ENCODE measurements at regions of chr3 and their contacts with region 1.

Region 1: DNA sequence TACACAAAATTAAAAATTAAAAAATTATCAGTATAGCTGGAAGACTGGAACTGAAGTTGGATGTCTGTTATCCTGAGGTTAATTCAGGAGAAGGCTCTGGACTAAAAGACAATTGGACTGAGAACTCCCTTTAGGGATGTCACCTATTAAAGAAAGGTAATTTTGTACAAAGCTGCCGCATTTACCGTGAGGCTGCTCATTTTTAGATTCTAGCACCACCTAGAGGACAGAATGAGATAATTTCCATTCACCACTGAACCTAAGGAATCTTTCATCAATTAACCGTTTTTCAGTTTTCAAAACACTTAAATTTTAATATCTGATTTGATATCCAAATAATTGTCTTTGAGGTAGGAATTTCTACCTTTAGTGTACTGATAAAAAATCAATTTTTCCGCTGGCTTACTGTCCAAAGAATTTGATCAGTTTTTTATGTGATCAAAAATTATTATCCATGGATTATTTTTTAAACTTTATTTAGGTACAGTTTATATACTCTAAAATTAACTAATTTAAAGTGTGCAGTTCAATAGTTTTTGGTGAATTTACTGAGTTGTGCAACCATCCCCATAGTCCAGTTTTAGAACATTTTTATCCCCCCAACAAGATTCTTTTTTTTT is 106.7 kb upstream of the TNIK start:
- DNase-seq: peak; percentile 76
- ATAC-seq: peak; percentile 56; the same call in 1 of the 2 replicates
- H3K4me3 ChIP-seq: no peak overlapping the region
- H3K27ac ChIP-seq: no peak overlapping the region
- H3K4me1 ChIP-seq: peaks cover 23% of the 10 kb centered on the region
- H3K27me3 ChIP-seq: no peaks in the 10 kb centered on the region
- CTCF ChIP-seq: peak; percentile 91

Region 2: GRCh38 chr3:171049861-171050444 is 517.0 kb before region 1 on chr3:
- CTCF ChIA-PET with region 1: interaction called, 4 read pairs
- POLR2A ChIA-PET with region 1: no interaction called
- intact Hi-C with region 1: loop called (anchors 1 kb)
- DNase-seq: peak; percentile 81
- ATAC-seq: peak; percentile 98
- H3K4me3 ChIP-seq: no peak overlapping the region
- H3K27ac ChIP-seq: no peak overlapping the region
- H3K4me1 ChIP-seq: peaks cover 9% of the 10 kb centered on the region
- H3K27me3 ChIP-seq: no peaks in the 10 kb centered on the region
- CTCF ChIP-seq: peak; percentile 90

Region 3: GRCh38 chr3:171162986-171163723 is 403.8 kb before region 1 on chr3:
- CTCF ChIA-PET with region 1: interaction called, 3 read pairs
- POLR2A ChIA-PET with region 1: no interaction called
- intact Hi-C with region 1: loop called (anchors 1 kb)
- DNase-seq: peak; percentile 53
- ATAC-seq: no peak
- H3K4me3 ChIP-seq: no peak overlapping the region
- H3K27ac ChIP-seq: 0 out of 2 replicates have a peak overlapping the region, but pooled peaks have one; percentile 51
- H3K4me1 ChIP-seq: peaks cover 21% of the 10 kb centered on the region
- H3K27me3 ChIP-seq: no peaks in the 10 kb centered on the region
- CTCF ChIP-seq: peak; percentile 87

Region 4: GRCh38 chr3:171261446-171261845 is 305.5 kb before region 1 on chr3:
- CTCF ChIA-PET with region 1: no interaction called
- POLR2A ChIA-PET with region 1: no interaction called
- intact Hi-C with region 1: loop called (anchors 5 kb)
- DNase-seq: peak; percentile 78
- ATAC-seq: peak; percentile 97
- H3K4me3 ChIP-seq: peak overlapping the region; percentile 20
- H3K27ac ChIP-seq: peak overlapping the region; percentile 69
- H3K4me1 ChIP-seq: peaks cover 31% of the 10 kb centered on the region
- H3K27me3 ChIP-seq: no peaks in the 10 kb centered on the region
- CTCF ChIP-seq: no peak

Region 5: GRCh38 chr3:171358181-171358880 is 208.6 kb before region 1 on chr3:
- CTCF ChIA-PET with region 1: no interaction called
- POLR2A ChIA-PET with region 1: no interaction called
- intact Hi-C with region 1: loop called (anchors 1 kb)
- DNase-seq: peak; percentile 65
- ATAC-seq: peak; percentile 8; the same call in 1 of the 2 replicates
- H3K4me3 ChIP-seq: no peak overlapping the region
- H3K27ac ChIP-seq: peak overlapping the region; percentile 88
- H3K4me1 ChIP-seq: peaks cover 53% of the 10 kb centered on the region
- H3K27me3 ChIP-seq: no peaks in the 10 kb centered on the region
- CTCF ChIP-seq: no peak

Region 6: DNA sequence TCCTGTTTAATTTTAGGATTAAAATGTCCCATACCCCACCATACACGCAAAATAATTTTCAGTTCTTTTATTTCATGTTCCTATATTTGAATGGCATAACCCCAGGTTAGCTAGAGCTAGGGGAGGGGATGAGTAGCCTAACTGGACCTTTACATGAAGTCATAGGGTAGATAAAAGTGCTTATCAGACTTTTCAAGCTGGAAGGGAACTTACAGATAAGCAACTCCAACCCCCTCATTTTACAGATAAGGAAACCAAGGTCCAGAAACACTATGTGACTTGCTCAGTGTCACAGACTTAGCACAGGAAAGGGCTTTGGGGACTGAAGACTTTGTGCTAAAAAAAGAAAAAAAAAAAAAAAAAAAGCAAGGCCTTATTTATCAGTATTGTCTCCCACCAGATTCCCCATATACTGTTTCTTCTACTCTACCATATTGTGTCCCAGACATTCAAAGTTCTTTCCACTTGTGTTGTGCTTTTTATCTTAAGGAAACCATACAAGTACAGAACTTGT is 96.1 kb before region 1 on chr3:
- CTCF ChIA-PET with region 1: no interaction called
- POLR2A ChIA-PET with region 1: no interaction called
- intact Hi-C with region 1: no loop called
- DNase-seq: no peak
- ATAC-seq: no peak
- H3K4me3 ChIP-seq: no peak overlapping the region
- H3K27ac ChIP-seq: no peak overlapping the region
- H3K4me1 ChIP-seq: no peaks in the 10 kb centered on the region
- H3K27me3 ChIP-seq: no peaks in the 10 kb centered on the region
- CTCF ChIP-seq: no peak

Region 7: GRCh38 chr3:171606151-171606751 is 39.3 kb after region 1 on chr3:
- CTCF ChIA-PET with region 1: no interaction called
- POLR2A ChIA-PET with region 1: no interaction called
- intact Hi-C with region 1: no loop called
- DNase-seq: no peak
- ATAC-seq: no peak
- H3K4me3 ChIP-seq: no peak overlapping the region
- H3K27ac ChIP-seq: no peak overlapping the region
- H3K4me1 ChIP-seq: no peaks in the 10 kb centered on the region
- H3K27me3 ChIP-seq: no peaks in the 10 kb centered on the region
- CTCF ChIP-seq: no peak

Measured in PC-3 (cell line).